Right ventricle myocardium superior (tissue), 1 donor: ENCODE measurements at regions of chr19 and their contacts with region 1.

Region 1: GRCh38 chr19:42132851-42133528 is 744 bp upstream of the POU2F2 start:
- DNase-seq: peak; percentile 85
- ATAC-seq: peak; percentile 91

Region 2: GRCh38 chr19:42184401-42184861 is 51.4 kb after region 1 on chr19:
- intact Hi-C with region 1: loop called (anchors 2 kb)
- DNase-seq: peak; percentile 82
- ATAC-seq: peak; percentile 76

Region 3: DNA sequence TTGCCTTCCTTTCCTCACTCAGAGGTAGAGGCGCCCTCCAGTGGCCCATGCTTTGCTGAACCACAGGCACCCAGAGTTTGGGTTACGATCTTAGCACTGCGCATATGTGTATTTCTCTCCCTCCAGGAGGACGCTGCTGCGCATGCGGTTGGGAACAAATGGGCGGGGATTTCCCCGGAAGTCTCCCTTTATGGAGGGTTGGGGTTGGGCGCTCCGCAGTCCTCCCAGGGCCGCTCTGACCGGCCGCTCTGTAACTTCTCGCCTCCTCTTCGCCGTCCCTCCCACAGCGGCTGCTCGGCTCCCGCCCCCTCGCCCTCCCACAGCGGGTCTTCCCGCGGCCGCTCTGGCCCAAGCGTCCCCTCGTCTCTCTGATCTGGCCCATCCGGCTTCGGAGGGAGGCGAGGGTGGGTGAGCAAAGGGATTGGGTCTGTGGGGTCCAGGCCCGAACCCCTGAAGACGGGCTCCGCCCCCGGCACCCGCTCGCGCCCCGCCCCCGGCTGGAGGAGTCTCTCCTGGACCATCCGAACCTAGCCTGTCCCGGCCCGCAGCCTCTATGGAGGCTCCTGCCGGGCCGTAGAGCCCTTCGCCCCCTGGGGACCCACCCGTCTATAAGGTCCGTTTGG is 192.4 kb after region 1 on chr19 and contains the start of gene MEGF8:
- intact Hi-C with region 1: loop called (anchors 10 kb)
- DNase-seq: peak; percentile 98
- ATAC-seq: peak; percentile 98
- total RNA-seq, gene MEGF8: 34.3 TPM